MCF 10A (cell line): ENCODE measurements at regions of chr22 and their contacts with region 1.

Region 1: GRCh38 chr22:20507253-20508066 is at the start of gene MED15:
- DNase-seq: peak; percentile 87
- H3K4me3 Mint-ChIP-seq: peak within 1 kb of the TSS; percentile 90
- H3K27ac Mint-ChIP-seq: peak within 1 kb of the TSS; percentile 99
- H3K4me1 Mint-ChIP-seq: peaks cover 50% of the 10 kb centered on the region
- H3K27me3 Mint-ChIP-seq: no peaks in the 10 kb centered on the region
- CTCF ChIP-seq: no peak
- total RNA-seq, gene MED15: 122 TPM in 2 replicates

Region 2: GRCh38 chr22:20495861-20496681 is 11.4 kb before region 1 on chr22:
- CTCF ChIA-PET with region 1: interaction called, 3 read pairs
- POLR2A ChIA-PET with region 1: interaction called, 11 read pairs
- intact Hi-C with region 1: no loop called
- DNase-seq: peak; percentile 88
- H3K4me3 Mint-ChIP-seq: peak overlapping the region; percentile 97
- H3K27ac Mint-ChIP-seq: peak overlapping the region; percentile 91
- H3K4me1 Mint-ChIP-seq: peaks cover 18% of the 10 kb centered on the region
- H3K27me3 Mint-ChIP-seq: no peaks in the 10 kb centered on the region
- CTCF ChIP-seq: peak; percentile 83

Region 3: GRCh38 chr22:20523086-20523983 is 15.9 kb after region 1 on chr22:
- CTCF ChIA-PET with region 1: interaction called, 4 read pairs
- POLR2A ChIA-PET with region 1: interaction called, 332 read pairs
- intact Hi-C with region 1: no loop called
- DNase-seq: peak; percentile 52
- H3K4me3 Mint-ChIP-seq: peak overlapping the region; percentile 4
- H3K27ac Mint-ChIP-seq: peak overlapping the region; percentile 31
- H3K4me1 Mint-ChIP-seq: peaks cover 47% of the 10 kb centered on the region
- H3K27me3 Mint-ChIP-seq: no peaks in the 10 kb centered on the region
- CTCF ChIP-seq: no peak

Region 4: GRCh38 chr22:20615021-20615420 is 107.6 kb after region 1 on chr22:
- CTCF ChIA-PET with region 1: no interaction called
- POLR2A ChIA-PET with region 1: no interaction called
- intact Hi-C with region 1: no loop called
- DNase-seq: no peak
- H3K4me3 Mint-ChIP-seq: no peak overlapping the region
- H3K27ac Mint-ChIP-seq: no peak overlapping the region
- H3K4me1 Mint-ChIP-seq: peaks cover 6% of the 10 kb centered on the region
- H3K27me3 Mint-ChIP-seq: no peaks in the 10 kb centered on the region
- CTCF ChIP-seq: no peak